ENCODE measurements at regions of chr9 and their contacts with region 1.

Region 1: GRCh38 chr9:23826120-23826629 is at the start of gene ELAVL2:
- DNase-seq: peak; percentile 84
- ATAC-seq: peak; percentile 98
- total RNA-seq, gene ELAVL2: not detected

Region 2: DNA sequence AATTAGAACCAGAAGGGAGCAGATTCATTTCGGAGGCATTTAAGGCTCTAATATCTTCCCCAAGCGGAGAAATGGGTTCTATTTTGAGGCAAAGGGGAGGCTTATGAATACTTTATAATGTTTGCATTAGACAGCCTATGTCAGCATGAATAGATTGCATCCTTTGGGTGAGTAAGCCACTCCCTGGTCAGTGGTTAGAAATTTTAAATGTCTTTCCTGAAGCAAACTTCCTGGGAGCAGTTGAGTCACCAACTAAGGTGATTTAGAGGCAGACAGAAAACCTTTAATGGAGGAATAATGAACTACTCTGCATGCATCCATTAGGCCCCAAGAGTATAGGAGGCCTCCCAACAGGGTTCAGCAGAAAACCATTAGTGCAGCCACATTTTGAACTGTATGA is 205.0 kb before region 1 on chr9:
- intact Hi-C with region 1: no loop called
- DNase-seq: no peak
- ATAC-seq: no peak

Region 3: GRCh38 chr9:23682891-23683431 is 143.2 kb before region 1 on chr9:
- intact Hi-C with region 1: loop called (anchors 10 kb)
- DNase-seq: no peak
- ATAC-seq: no peak

Region 4: DNA sequence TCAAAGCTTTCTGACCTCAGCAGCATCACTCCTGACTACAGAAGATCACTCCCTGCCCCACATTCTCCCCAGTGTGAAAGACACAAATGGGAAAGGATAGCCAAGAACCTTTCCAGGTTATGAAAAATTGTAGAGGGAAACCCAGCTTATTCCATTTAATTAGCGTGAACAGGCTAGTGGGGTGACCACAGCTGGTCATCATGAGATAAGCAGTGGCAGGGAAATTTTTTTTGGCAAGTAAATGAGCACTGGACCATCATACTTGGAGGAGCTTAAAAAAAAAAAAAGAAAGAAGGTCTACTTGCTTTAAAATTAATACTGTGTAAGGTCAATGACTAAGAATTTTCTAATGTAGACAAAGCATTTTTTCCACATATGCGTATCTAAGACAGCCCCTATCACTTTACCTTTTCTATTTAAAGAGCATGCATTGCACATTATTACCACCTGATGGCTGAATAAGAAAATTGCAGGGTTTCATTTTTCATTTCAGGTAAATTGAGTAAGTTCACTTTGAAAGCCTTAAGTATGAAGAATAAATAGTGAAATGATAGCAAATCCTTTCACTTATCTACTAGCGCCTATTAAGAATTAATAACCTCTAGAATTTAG is 123.8 kb before region 1 on chr9:
- intact Hi-C with region 1: no loop called
- DNase-seq: no peak
- ATAC-seq: no peak